ENCODE measurements at regions of chrX and their contacts with region 1.

Region 1: GRCh38 chrX:150898343-150899190 is at the start of gene CD99L2:
- DNase-seq: peak; percentile 81 to 95
- H3K4me3 ChIP-seq: peak within 1 kb of the TSS; percentile 83
- H3K27ac ChIP-seq: no peak within 1 kb of the TSS
- H3K4me1 ChIP-seq: peaks cover 7% of the 10 kb centered on the region
- H3K27me3 ChIP-seq: peaks cover 5% of the 10 kb centered on the region
- CTCF ChIP-seq: no peak
- total RNA-seq, gene CD99L2: 22.5 and 29.6 TPM in 2 replicates

Region 2: GRCh38 chrX:150772150-150772970 is 126.2 kb before region 1 on chrX:
- CTCF ChIA-PET with region 1: no interaction called
- POLR2A ChIA-PET with region 1: no interaction called
- intact Hi-C with region 1: loop called (anchors 5 kb)
- DNase-seq: peak; percentile 51 to 82
- H3K4me3 ChIP-seq: no peak overlapping the region
- H3K27ac ChIP-seq: no peak overlapping the region
- H3K4me1 ChIP-seq: no peaks in the 10 kb centered on the region
- H3K27me3 ChIP-seq: no peaks in the 10 kb centered on the region
- CTCF ChIP-seq: peak; percentile 97

Region 3: GRCh38 chrX:150848914-150849365 is 49.6 kb before region 1 on chrX:
- CTCF ChIA-PET with region 1: no interaction called
- POLR2A ChIA-PET with region 1: no interaction called
- intact Hi-C with region 1: loop called (anchors 2 kb)
- DNase-seq: peak; percentile 39 to 63
- H3K4me3 ChIP-seq: no peak overlapping the region
- H3K27ac ChIP-seq: no peak overlapping the region
- H3K4me1 ChIP-seq: peaks cover 10% of the 10 kb centered on the region
- H3K27me3 ChIP-seq: no peaks in the 10 kb centered on the region
- CTCF ChIP-seq: no peak

Region 4: GRCh38 chrX:151396825-151397740 is 498.5 kb after region 1 on chrX and contains the start of gene VMA21:
- CTCF ChIA-PET with region 1: no interaction called
- POLR2A ChIA-PET with region 1: no interaction called
- intact Hi-C with region 1: loop called (anchors 10 kb)
- DNase-seq: peak; percentile 81 to 89
- H3K4me3 ChIP-seq: peak within 1 kb of the TSS; percentile 97
- H3K27ac ChIP-seq: peak within 1 kb of the TSS; percentile 82
- H3K4me1 ChIP-seq: peaks cover 40% of the 10 kb centered on the region
- H3K27me3 ChIP-seq: no peaks in the 10 kb centered on the region
- CTCF ChIP-seq: no peak
- total RNA-seq, gene VMA21: 36.8 and 58.4 TPM in 2 replicates

Measured in PC-9 (cell line).